ENCODE measurements at regions of chr12 and their contacts with region 1.

Region 1: GRCh38 chr12:3135522-3136461 is 58.6 kb downstream of the TSPAN9 start:
- DNase-seq: peak; percentile 90
- H3K4me3 ChIP-seq: no peak overlapping the region; a peak in 1 of 4 replicates
- H3K27ac ChIP-seq: no peak overlapping the region
- H3K4me1 ChIP-seq: peaks cover 13 to 22% of the 10 kb centered on the region in 2 experiments; a peak in 3 of 4 replicates
- H3K27me3 ChIP-seq: no peaks in the 10 kb centered on the region
- CTCF ChIP-seq: peak; percentile 78
- EP300 ChIP-seq: no peak
- RAD21 ChIP-seq: peak; percentile 96

Region 2: GRCh38 chr12:2959505-2960389 is 176.0 kb before region 1 on chr12:
- CTCF ChIA-PET with region 1: no interaction called
- POLR2A ChIA-PET with region 1: no interaction called
- DNase-seq: peak; percentile 88
- H3K4me3 ChIP-seq: peak overlapping the region; percentile 66 to 80
- H3K27ac ChIP-seq: peak overlapping the region; percentile 74 to 77
- H3K4me1 ChIP-seq: peaks cover 17 to 22% of the 10 kb centered on the region in 2 experiments
- H3K27me3 ChIP-seq: no peaks in the 10 kb centered on the region
- CTCF ChIP-seq: no peak
- EP300 ChIP-seq: peak in 1 of 2 experiments; percentile 4; a peak in 1 of 4 replicates
- RAD21 ChIP-seq: no peak

Region 3: GRCh38 chr12:3107071-3107583 is 28.7 kb before region 1 on chr12:
- CTCF ChIA-PET with region 1: interaction called, 33 read pairs
- POLR2A ChIA-PET with region 1: interaction called, 4 read pairs
- DNase-seq: peak; percentile 65
- H3K4me3 ChIP-seq: no peak overlapping the region
- H3K27ac ChIP-seq: peak overlapping the region; percentile 29 to 77
- H3K4me1 ChIP-seq: peaks cover 35 to 48% of the 10 kb centered on the region in 2 experiments; a peak in 3 of 4 replicates
- H3K27me3 ChIP-seq: no peaks in the 10 kb centered on the region
- CTCF ChIP-seq: no peak; the same call in 1 of the 2 replicates
- EP300 ChIP-seq: no peak
- RAD21 ChIP-seq: no peak

Region 4: GRCh38 chr12:3122835-3123678 is 12.7 kb before region 1 on chr12:
- CTCF ChIA-PET with region 1: interaction called, 41 read pairs
- POLR2A ChIA-PET with region 1: no interaction called
- DNase-seq: peak; percentile 74
- H3K4me3 ChIP-seq: no peak overlapping the region
- H3K27ac ChIP-seq: peak overlapping the region; percentile 80 to 84
- H3K4me1 ChIP-seq: peaks cover 18 to 26% of the 10 kb centered on the region in 2 experiments
- H3K27me3 ChIP-seq: no peaks in the 10 kb centered on the region
- CTCF ChIP-seq: no peak
- EP300 ChIP-seq: peak in 1 of 2 experiments; percentile 7; a peak in 2 of 4 replicates
- RAD21 ChIP-seq: no peak

Region 5: GRCh38 chr12:3168223-3169221 is 32.7 kb after region 1 on chr12:
- CTCF ChIA-PET with region 1: interaction called, 17 read pairs
- POLR2A ChIA-PET with region 1: no interaction called
- DNase-seq: no peak
- H3K4me3 ChIP-seq: no peak overlapping the region
- H3K27ac ChIP-seq: peak overlapping the region in 1 of 2 experiments; percentile 95; a peak in 2 of 4 replicates
- H3K4me1 ChIP-seq: peaks cover 49 to 56% of the 10 kb centered on the region in 2 experiments
- H3K27me3 ChIP-seq: no peaks in the 10 kb centered on the region
- CTCF ChIP-seq: no peak
- EP300 ChIP-seq: peak in 1 of 2 experiments; percentile 39; a peak in 1 of 4 replicates
- RAD21 ChIP-seq: no peak

Region 6: DNA sequence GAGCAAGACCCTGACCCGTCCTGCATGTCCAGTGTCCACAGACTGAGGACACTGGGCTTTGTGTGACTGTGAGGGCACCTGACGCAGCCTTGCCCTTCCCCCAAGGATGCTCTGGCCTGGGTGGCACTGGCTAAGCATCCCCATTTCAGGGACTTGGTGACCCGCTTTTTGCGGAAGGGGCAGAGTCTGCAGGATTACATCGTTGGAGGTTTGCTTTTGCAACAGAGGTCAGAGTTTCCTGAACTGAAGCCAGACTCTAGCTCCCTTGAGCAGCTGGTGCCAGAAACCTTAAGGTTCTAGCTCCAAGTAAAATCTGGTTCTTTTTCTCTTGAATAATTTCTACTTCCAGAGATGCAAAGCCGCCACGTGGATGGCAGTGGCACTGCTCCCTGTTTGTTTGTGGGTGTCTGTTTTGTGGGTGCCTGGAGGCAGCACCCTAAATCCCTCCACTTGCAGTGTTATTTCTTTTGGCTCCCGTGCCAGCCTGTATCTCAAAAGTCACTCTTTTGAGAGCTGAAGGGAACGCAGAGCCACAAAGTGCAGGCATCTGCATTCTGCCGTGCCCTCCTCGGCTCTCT is 126.1 kb after region 1 on chr12:
- CTCF ChIA-PET with region 1: interaction called, 13 read pairs
- POLR2A ChIA-PET with region 1: no interaction called
- DNase-seq: no peak
- H3K4me3 ChIP-seq: no peak overlapping the region
- H3K27ac ChIP-seq: no peak overlapping the region
- H3K4me1 ChIP-seq: peaks cover 0 to 21% of the 10 kb centered on the region in 2 experiments; a peak in 2 of 4 replicates
- H3K27me3 ChIP-seq: no peaks in the 10 kb centered on the region
- CTCF ChIP-seq: no peak
- EP300 ChIP-seq: no peak
- RAD21 ChIP-seq: no peak

Measured in SK-N-SH (cell line).